ENCODE measurements at regions of chr6 and their contacts with region 1.

Region 1: DNA sequence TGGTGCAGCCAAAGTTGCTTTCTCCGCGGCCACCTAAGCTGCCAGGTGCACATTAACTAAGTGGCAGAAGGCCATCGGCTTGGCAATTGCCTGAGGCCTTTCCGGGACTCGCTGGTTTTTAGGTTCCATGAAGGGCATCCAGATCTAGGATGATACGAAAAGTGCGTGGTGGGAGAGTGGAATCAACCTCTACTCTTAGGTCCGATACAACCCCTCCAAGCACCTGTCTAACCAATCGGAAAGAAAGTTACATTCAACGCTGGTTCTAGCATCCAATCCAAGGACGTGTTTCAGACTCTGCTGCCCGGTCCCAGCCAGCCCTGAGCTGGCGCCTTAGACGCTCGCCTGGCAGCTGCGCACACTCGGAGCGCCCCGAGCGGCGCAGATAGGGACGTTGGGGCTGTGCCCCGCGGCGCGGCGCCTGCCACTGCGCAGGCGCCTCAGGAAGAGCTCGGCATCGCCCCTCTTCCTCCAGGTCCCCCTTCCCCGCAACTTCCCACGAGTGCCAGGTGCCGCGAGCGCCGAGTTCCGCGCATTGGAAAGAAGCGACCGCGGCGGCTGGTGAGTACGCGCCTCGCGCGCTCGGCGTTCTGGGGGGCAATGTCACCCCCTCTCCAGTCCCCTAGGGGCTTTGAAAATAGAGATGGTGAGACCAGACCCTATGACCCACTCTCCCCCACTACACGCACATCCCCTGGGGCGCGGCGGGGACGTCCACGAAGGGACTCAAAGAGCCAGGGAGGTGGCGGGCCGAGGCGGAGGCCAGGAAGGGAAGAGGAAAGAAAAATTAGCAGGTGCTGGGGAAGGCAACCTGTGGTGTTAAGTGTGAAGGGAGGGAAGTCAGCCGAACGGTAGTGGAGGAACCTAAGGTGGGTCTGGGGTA is at the start of gene ENPP4:
- DNase-seq: peak; percentile 75 to 95 (median 88)
- ATAC-seq: peak; percentile 99 to 100 (median 99)
- H3K4me3 ChIP-seq: peak within 1 kb of the TSS; percentile 90 to 100
- H3K4me3 Mint-ChIP-seq: peak within 1 kb of the TSS; percentile 93 to 100 (median 97)
- H3K27ac ChIP-seq: peak within 1 kb of the TSS; percentile 71
- H3K27ac Mint-ChIP-seq: peak within 1 kb of the TSS; percentile 79 to 96
- H3K4me1 ChIP-seq: peaks cover 8 to 16% of the 10 kb centered on the region in 2 experiments
- H3K4me1 Mint-ChIP-seq: peaks cover 40 to 58% (median 48%) of the 10 kb centered on the region in 3 donors
- H3K27me3 ChIP-seq: no peaks in the 10 kb centered on the region
- H3K27me3 Mint-ChIP-seq: no peaks in the 10 kb centered on the region
- total RNA-seq, gene ENPP4: 6.3 to 9.4 (median 8.1) TPM

Region 2: DNA sequence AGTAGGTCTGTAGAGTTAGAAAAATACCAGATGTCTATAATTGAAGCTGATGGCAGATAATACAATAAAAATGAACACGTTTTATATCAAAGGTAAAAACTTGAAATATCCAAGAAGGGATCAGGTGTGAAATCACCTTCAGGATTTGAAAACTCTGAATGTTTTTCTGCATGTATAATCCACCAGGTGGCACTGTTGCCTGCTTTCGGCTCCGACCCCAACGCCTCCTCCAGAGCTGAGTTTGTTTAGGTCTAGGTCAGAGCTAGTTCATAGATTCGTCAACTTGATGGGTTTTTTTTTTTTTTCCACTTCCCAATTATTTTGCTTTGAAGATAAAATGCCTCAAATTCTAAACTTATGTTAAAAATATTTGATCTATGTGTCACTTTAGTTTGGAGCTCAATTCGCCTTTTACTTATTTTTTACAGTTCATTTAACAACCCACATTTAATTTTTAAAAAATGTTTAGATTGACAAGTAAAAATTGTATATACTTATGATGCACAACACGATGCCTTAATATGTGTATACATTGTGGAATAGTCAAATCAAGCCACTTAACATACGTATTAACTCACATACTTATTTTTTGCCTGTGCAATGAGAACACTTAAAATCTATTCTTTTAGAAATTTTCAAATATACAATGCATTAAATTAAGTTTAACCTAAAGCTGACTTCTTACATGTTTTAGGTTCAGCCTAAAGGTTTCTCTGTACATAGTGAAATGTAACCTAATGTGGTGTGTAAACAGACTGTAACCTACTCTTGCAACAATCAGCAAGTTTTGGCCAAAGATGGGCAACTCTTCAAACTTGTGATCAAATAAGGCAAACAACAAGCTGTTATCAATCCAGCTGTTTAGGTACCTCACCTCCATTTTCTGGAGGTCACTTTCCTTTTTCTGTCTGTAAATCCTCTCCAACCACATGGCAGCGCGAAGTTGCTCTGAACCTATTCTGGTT is 39.5 kb before region 1 on chr6:
- CTCF ChIA-PET with region 1: interaction called, 5 to 10 read pairs
- POLR2A ChIA-PET with region 1: no interaction called
- DNase-seq: peak; percentile 9 to 77 (median 42)
- ATAC-seq: peak in 2 of 4 experiments; percentile 49 to 50
- H3K4me3 ChIP-seq: no peak overlapping the region
- H3K4me3 Mint-ChIP-seq: no peak overlapping the region
- H3K27ac ChIP-seq: no peak overlapping the region
- H3K27ac Mint-ChIP-seq: no peak overlapping the region
- H3K4me1 ChIP-seq: no peaks in the 10 kb centered on the region
- H3K4me1 Mint-ChIP-seq: no peaks in the 10 kb centered on the region
- H3K27me3 ChIP-seq: peaks cover 0 to 10% of the 10 kb centered on the region in 2 experiments
- H3K27me3 Mint-ChIP-seq: peaks cover 23 to 34% of the 10 kb centered on the region in 2 donors